MCF 10A (cell line): ENCODE measurements at regions of chr10 and their contacts with region 1.

Region 1: GRCh38 chr10:60549686-60550085 is 160.0 kb upstream of the ANK3 start:
- DNase-seq: peak; percentile 63
- H3K4me3 Mint-ChIP-seq: no peak overlapping the region
- H3K27ac Mint-ChIP-seq: no peak overlapping the region
- H3K4me1 Mint-ChIP-seq: no peaks in the 10 kb centered on the region
- H3K27me3 Mint-ChIP-seq: no peaks in the 10 kb centered on the region
- CTCF ChIP-seq: peak; percentile 34

Region 2: GRCh38 chr10:60677531-60678129 is 127.9 kb after region 1 on chr10:
- CTCF ChIA-PET with region 1: no interaction called
- POLR2A ChIA-PET with region 1: no interaction called
- intact Hi-C with region 1: no loop called
- DNase-seq: no peak
- H3K4me3 Mint-ChIP-seq: no peak overlapping the region
- H3K27ac Mint-ChIP-seq: no peak overlapping the region
- H3K4me1 Mint-ChIP-seq: no peaks in the 10 kb centered on the region
- H3K27me3 Mint-ChIP-seq: no peaks in the 10 kb centered on the region
- CTCF ChIP-seq: no peak

Region 3: DNA sequence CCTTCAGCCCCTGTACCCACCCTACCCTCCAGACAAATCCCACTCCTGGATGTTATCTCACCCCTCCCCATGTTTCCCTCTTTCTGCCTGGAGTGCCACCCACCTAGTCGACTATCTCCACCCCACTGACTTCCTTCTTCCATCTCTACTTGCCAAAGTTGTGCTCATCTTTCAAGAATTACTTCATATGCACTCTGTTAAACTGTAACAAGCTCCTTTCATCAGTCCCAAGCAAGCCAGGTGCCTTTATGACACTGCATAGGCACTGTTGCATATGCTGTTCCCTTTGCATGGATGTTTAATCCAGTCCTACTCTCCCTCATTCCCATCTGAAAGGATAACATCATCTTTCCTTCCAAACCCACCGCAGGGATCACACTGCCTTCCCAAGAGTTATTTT is 219.7 kb after region 1 on chr10:
- CTCF ChIA-PET with region 1: interaction called, 5 read pairs
- POLR2A ChIA-PET with region 1: no interaction called
- intact Hi-C with region 1: loop called (anchors 1 kb)
- DNase-seq: no peak
- H3K4me3 Mint-ChIP-seq: no peak overlapping the region
- H3K27ac Mint-ChIP-seq: no peak overlapping the region
- H3K4me1 Mint-ChIP-seq: peaks cover 21% of the 10 kb centered on the region
- H3K27me3 Mint-ChIP-seq: no peaks in the 10 kb centered on the region
- CTCF ChIP-seq: no peak

Region 4: DNA sequence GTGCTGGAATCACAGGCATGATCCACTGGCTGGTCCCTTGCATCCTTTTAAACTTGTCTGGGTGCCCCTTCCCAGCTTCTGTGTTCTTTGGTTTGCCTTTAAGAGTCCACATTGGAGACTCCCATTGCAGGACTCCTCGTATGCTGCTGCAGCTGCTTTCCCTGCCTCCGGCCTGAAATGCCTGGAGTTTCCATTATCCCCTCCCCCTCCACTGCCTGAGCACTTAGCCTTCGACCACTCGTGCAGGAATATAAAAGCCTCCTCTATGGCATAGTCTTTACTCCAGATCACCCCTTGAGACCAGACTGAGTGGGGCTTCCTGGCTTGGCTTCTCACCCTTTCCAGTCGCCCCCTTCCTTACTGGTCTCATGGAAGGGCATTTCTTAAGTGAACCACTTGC is 314.1 kb after region 1 on chr10:
- CTCF ChIA-PET with region 1: no interaction called
- POLR2A ChIA-PET with region 1: no interaction called
- intact Hi-C with region 1: no loop called
- DNase-seq: no peak
- H3K4me3 Mint-ChIP-seq: no peak overlapping the region
- H3K27ac Mint-ChIP-seq: no peak overlapping the region
- H3K4me1 Mint-ChIP-seq: no peaks in the 10 kb centered on the region
- H3K27me3 Mint-ChIP-seq: no peaks in the 10 kb centered on the region
- CTCF ChIP-seq: no peak